Head of caudate nucleus (tissue), 42 donors: ENCODE measurements at regions of chr2 and their contacts with region 1.

Region 1: GRCh38 chr2:208254871-208255556 is at the start of gene IDH1:
- DNase-seq: peak; percentile 96 to 99 (median 98)

Region 2: GRCh38 chr2:208175069-208175839 is 79.8 kb before region 1 on chr2:
- intact Hi-C with region 1: loop called (anchors 5 kb)
- DNase-seq: peak; percentile 54 to 94 (median 85)

Region 3: DNA sequence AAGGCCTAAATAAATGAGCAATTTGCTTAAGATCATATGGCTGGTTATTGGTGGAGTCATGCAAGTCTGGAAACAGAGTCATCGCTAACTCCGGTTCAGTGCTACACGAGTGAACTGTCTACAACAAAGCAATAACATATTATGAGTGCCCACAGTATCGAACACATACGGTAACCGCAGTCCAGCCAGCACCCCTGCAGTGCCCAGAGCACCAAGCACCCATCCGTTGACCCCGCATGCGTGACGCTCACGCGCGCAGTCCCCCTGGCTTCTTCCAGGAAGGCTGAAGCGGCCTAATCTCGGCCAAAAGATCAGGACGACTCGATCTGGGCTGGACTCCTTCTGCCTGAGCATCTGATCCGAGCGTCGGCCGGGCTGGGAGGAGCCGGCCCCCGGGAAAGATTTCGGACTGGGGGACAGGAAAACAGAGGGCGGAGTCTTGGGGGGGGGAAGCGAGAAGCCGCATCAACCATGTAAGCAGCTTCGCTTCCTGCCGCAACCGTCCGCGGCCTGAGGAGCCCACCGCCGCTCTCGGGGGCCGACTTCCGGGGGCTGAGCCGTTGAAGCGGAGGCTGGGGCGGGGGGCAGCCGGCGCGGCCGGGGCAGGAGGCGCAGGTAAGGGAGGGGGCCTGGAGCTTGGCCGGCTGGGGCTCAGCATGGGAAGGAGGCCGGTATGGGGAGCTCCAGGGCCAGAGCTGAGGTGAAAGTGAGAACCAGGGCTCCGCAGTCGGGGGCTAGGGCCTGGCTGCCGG is 11.0 kb after region 1 on chr2 and contains the start of gene PIKFYVE:
- intact Hi-C with region 1: loop called (anchors 1 kb)
- DNase-seq: peak; percentile 96 to 100 (median 98)

Region 4: GRCh38 chr2:208489687-208490086 is 234.7 kb after region 1 on chr2:
- intact Hi-C with region 1: no loop called
- DNase-seq: no peak